ENCODE measurements at regions of chr6 and their contacts with region 1.

Region 1: GRCh38 chr6:35354361-35355135 is 12.2 kb downstream of the PPARD start:
- H3K4me3 ChIP-seq: no peak overlapping the region
- H3K27ac ChIP-seq: no peak overlapping the region
- H3K4me1 ChIP-seq: no peaks in the 10 kb centered on the region; the same call in 1 of the 2 replicates
- CTCF ChIP-seq: no peak

Region 2: DNA sequence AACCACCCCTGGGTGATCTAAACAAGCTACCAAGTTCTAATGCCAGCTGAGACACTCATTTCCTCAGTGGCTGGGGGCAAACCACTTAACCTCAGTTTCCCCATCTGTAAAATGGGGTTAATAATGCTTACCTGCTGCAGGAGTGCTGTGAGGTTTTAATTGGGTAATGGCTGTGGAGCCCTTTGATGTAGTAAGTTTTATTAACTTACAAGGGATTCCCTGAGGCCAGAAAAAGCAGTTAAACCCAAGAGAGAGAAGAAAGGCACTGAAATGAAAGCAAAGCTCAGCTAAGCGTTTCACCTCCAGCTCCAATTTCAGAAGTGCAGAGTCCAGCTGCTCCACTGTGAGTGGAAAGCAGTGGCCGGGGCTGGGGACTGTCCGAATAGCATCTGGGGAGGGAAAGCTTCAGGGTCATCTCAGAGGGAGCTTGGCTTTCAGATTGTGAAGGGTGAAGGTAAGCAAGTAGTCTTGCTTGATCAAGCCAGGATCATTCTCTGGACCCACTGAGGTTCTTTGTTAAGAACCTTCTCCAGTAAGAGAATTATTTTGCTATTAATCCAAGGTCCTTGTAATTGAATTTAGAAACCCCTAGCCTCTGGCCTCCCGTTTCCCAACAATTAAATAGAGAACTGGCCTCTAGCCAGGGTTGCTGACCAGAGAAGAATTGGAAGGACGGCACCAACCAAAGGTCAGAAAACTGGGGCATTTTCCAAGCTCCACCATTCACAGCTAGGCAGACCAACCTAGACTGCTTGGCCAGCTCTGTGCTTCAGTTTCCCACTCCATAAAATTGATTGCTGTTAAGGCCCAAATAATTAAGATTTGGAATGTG is 192.6 kb before region 1 on chr6:
- CTCF ChIA-PET with region 1: no interaction called
- POLR2A ChIA-PET with region 1: no interaction called
- H3K4me3 ChIP-seq: no peak overlapping the region
- H3K27ac ChIP-seq: no peak overlapping the region
- H3K4me1 ChIP-seq: no peaks in the 10 kb centered on the region; the same call in 1 of the 2 replicates
- CTCF ChIP-seq: no peak

Region 3: GRCh38 chr6:35377002-35377401 is 22.5 kb after region 1 on chr6:
- CTCF ChIA-PET with region 1: interaction called, 4 read pairs
- POLR2A ChIA-PET with region 1: interaction called, 12 read pairs
- H3K4me3 ChIP-seq: no peak overlapping the region
- H3K27ac ChIP-seq: no peak overlapping the region
- H3K4me1 ChIP-seq: no peaks in the 10 kb centered on the region
- CTCF ChIP-seq: no peak